ENCODE measurements at regions of chr16 and their contacts with region 1.

Region 1: GRCh38 chr16:85010931-85011845 is at the start of gene ZDHHC7:
- DNase-seq: peak; percentile 83
- total RNA-seq, gene ZDHHC7: 32.9 and 46.2 TPM in 2 replicates

Region 2: DNA sequence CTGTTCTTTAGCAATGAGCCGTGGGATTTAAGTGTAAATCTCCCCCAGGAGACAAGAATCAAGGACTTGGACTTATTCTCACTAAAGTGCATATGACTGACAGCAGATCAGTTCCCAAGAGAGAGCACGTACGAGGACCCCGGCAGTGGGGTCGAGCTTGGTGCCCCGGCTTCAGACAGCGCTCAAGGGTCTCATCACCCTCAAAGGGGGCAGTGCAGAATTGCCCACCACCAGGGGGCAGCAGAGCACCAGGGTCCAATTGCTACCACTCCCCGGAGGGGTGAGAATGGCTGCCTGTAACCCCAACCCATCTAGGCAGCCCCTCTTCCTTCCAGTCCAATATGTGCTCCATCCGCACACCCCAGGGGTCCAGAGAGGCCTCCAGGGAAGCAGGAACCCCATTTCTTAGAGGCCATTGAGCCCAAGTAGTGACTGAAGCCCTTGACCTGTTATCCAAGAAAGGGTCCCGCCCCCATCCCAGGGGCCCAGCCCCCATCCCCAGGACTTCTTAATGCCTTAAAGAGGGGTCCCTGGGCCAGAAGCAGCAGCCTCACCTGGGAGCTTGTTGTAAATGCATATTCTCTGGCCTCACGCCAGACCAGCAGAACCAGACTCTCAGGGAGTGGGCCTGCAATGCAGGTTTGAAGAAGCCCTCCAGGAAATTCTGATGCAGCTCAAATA is 86.0 kb before region 1 on chr16:
- in situ Hi-C with region 1: loop called (anchors 10 kb)
- DNase-seq: no peak

Region 3: DNA sequence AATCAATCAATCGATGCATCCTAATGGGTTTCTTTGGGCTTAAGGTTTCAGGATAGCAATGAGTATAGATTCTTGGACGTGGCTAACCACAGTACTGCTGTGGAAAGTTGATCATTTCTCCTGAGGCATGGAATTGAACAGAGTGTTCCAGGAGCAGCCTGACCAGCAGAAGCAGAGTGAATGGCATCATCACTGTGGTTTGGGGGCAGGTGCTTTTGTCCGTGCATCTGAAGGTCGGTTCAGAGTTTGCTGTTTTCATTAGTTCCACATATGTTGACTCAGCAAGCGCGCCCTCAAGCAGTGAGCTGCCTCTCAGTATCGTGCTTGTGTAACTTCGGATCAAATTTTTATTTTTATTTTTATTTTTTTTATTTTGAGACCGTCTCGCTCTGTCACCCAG is 41.3 kb after region 1 on chr16:
- in situ Hi-C with region 1: loop called (anchors 5 kb)
- DNase-seq: no peak